ENCODE measurements at regions of chr1 and their contacts with region 1.

Region 1: GRCh38 chr1:220217383-220217988 is 54.8 kb downstream of the RAB3GAP2 start:
- DNase-seq: no peak
- ATAC-seq: no peak
- H3K4me3 Mint-ChIP-seq: no peak overlapping the region
- H3K27ac Mint-ChIP-seq: no peak overlapping the region
- H3K4me1 Mint-ChIP-seq: peaks cover 28% of the 10 kb centered on the region
- H3K27me3 Mint-ChIP-seq: no peaks in the 10 kb centered on the region
- CTCF ChIP-seq: no peak

Region 2: GRCh38 chr1:220272047-220272840 is 54.8 kb after region 1 on chr1 and contains the start of gene RAB3GAP2:
- CTCF ChIA-PET with region 1: no interaction called
- POLR2A ChIA-PET with region 1: interaction called, 3 read pairs
- intact Hi-C with region 1: loop called (anchors 5 kb)
- DNase-seq: peak; percentile 96
- ATAC-seq: peak; percentile 94
- H3K4me3 Mint-ChIP-seq: no peak within 1 kb of the TSS
- H3K27ac Mint-ChIP-seq: no peak within 1 kb of the TSS
- H3K4me1 Mint-ChIP-seq: peaks cover 15% of the 10 kb centered on the region
- H3K27me3 Mint-ChIP-seq: peaks cover 5% of the 10 kb centered on the region
- CTCF ChIP-seq: no peak
- total RNA-seq, gene RAB3GAP2: 50.6 to 53.5 TPM